ENCODE measurements at regions of chr14 and their contacts with region 1.

Region 1: DNA sequence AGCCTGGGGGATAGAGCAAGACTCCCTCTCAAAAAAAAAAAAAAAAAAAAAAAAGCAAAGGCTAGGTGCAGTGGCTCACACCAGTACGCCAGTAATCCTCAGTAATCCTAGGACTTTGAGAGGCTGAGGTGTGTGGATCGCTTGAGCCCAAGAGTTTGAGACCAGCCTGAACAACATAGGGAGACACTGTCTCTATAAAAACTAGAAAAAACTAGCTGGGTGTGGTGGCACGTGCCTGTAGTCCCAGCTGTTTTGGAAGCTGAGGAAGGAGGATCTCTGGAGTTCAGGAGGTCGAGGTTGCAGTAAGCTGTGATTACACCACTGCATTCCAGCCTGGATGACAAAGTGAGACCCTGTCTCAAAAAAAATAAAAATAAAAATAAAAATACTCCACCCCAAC is 8.9 kb upstream of the RBM25 start:
- DNase-seq: no peak
- H3K4me3 ChIP-seq: no peak overlapping the region
- H3K27ac ChIP-seq: no peak overlapping the region
- H3K4me1 ChIP-seq: peaks cover 4% of the 10 kb centered on the region
- CTCF ChIP-seq: no peak

Region 2: GRCh38 chr14:73105050-73105449 is 55.6 kb after region 1 on chr14:
- CTCF ChIA-PET with region 1: no interaction called
- POLR2A ChIA-PET with region 1: interaction called, 4 read pairs
- intact Hi-C with region 1: loop called (anchors 2 kb)
- DNase-seq: no peak
- H3K4me3 ChIP-seq: no peak overlapping the region
- H3K27ac ChIP-seq: no peak overlapping the region
- H3K4me1 ChIP-seq: no peaks in the 10 kb centered on the region
- CTCF ChIP-seq: no peak

Region 3: GRCh38 chr14:73949744-73950734 is 900.6 kb after region 1 on chr14 and contains the starts of genes COQ6 and FAM161B:
- CTCF ChIA-PET with region 1: no interaction called
- POLR2A ChIA-PET with region 1: no interaction called
- intact Hi-C with region 1: no loop called
- DNase-seq: peak; percentile 95
- H3K4me3 ChIP-seq: peak within 1 kb of the TSS; percentile 75
- H3K27ac ChIP-seq: peak within 1 kb of the TSS; percentile 51
- H3K4me1 ChIP-seq: peaks cover 15% of the 10 kb centered on the region
- CTCF ChIP-seq: peak; percentile 61
- total RNA-seq, gene COQ6: 18.7 and 35.4 TPM in 2 replicates
- total RNA-seq, gene FAM161B: 2.3 and 2.6 TPM in 2 replicates

Measured in OCI-LY7 (cell line).